Kidney (tissue), 22 donors: ENCODE measurements at regions of chr3 and their contacts with region 1.

Region 1: DNA sequence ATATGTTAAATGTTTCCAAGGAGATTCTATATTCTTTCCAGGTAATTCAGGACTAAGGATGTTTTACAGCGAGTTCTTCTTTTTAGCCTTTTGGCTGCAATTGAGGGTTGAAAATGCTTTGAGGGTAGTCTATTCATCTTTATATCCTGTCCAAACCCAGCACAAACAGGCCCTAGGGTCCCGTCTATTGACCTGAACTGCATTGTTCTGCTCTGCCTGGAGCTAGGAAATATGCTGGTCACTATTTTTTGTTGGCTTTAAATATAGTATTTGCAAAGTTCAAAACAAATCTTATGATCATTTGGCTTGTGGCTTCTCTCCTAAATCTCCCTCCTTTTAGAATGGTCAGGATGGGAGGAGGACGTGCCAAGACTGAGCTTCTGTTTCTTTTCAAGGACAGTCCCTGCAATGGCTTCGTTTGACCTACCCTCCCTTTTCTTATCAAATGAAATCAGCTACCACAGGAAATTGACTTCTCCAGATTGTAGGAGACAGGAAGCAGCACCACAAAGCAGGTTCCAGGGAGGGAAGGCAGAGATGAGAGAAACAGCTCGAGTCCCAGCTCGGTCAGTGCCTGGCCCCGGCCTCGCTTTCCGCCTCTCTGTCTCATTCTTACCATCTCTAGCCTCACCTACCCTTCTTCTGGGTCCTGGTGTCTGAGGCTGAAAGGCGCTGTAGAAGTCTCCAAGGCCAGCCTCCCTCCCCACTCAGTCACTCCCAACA is 27.6 kb upstream of the NRROS start:
- DNase-seq: no peak
- H3K4me3 ChIP-seq: peak overlapping the region in 1 of 3 donors; percentile 21
- H3K27ac ChIP-seq: peak overlapping the region in 1 of 2 donors; percentile 84
- H3K4me1 ChIP-seq: peaks cover 0 to 3% (median 0%) of the 10 kb centered on the region in 3 donors
- H3K27me3 ChIP-seq: no peaks in the 10 kb centered on the region
- CTCF ChIP-seq: no peak

Region 2: DNA sequence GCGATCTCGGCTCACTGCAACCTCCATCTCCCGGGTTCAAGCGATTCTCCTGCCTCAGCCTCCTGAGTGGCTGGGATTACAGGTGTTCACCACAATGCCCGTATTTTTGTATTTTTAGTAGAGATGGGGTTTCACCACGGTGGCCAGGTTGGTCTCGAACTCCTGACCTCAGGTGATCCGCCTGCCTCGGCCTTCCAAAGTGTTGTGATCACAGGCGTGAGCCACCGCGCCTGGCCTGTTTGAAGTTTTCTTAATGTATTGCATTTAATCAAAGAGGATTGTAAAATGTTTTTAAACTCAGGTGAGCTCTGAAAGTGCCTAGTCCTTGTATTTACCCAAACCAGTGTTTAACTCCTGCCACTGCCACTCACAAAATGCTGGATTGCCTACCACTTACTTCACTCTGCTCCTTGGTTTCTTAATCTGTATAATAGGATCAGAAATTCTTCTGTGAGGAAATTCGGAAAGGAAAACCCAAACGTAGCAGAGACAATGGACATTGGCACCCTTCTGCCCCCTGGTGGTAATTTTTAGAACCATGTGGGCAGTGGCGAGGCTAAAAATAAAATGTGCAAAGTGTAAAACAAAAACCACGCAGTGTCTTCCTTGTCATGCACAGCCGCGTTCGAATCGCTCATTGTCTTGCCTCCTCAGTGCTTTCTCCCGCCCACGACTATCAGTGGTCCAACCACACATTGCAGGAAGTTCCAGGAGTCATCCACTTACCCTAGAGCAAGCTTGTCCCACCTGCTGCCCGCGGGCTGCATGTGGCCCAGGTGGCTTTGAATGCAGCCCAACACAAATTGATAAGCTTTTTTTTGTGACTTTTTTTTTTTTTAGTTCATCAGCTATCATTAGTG is 72.9 kb after region 1 on chr3:
- intact Hi-C with region 1: loop called (anchors 10 kb)
- DNase-seq: peak in 4 of 5 donors; percentile 59 to 78 (median 66)
- H3K4me3 ChIP-seq: peak overlapping the region in 2 of 3 donors; percentile 20 to 45
- H3K27ac ChIP-seq: no peak overlapping the region
- H3K4me1 ChIP-seq: peaks cover 0 to 5% (median 0%) of the 10 kb centered on the region in 3 donors
- H3K27me3 ChIP-seq: no peaks in the 10 kb centered on the region
- CTCF ChIP-seq: peak; percentile 88